ENCODE measurements at regions of chr3 and their contacts with region 1.

Region 1: GRCh38 chr3:189961525-189962161 is 159.1 kb downstream of the P3H2 start:
- DNase-seq: peak; percentile 65
- H3K4me3 ChIP-seq: no peak overlapping the region; a peak in 1 of 4 replicates
- H3K27ac ChIP-seq: no peak overlapping the region
- H3K4me1 ChIP-seq: no peaks in the 10 kb centered on the region; a peak in 1 of 4 replicates
- H3K27me3 ChIP-seq: no peaks in the 10 kb centered on the region; the same call in 1 of the 2 replicates
- CTCF ChIP-seq: peak; percentile 93
- EP300 ChIP-seq: no peak
- RAD21 ChIP-seq: peak; percentile 86

Region 2: DNA sequence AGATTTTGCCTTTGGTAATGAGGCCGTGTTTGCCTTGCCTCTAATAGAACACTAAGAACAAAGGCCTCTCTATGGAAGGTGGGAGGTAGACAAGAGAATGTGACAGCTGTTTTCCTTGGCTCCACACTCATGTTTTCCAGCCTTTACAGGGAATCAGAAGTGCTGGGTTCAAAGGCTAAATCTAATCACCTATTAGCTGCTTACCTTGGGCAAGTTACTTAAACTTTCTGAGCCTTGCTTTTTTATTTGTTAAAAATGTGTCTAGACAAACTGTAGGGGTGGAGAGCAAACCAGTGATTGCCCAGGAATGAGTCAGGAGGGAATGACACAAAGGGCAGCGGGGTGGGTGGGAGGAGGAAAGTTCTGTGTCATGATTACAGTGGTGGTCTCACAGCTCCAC is 20.0 kb before region 1 on chr3:
- CTCF ChIA-PET with region 1: interaction called, 13 read pairs
- POLR2A ChIA-PET with region 1: no interaction called
- DNase-seq: no peak
- H3K4me3 ChIP-seq: no peak overlapping the region
- H3K27ac ChIP-seq: no peak overlapping the region
- H3K4me1 ChIP-seq: 0 out of 4 replicates have a peak, but pooled peaks cover 0 to 4% of the 10 kb centered on the region in 2 experiments
- H3K27me3 ChIP-seq: peaks cover 16% of the 10 kb centered on the region; the same call in 1 of the 2 replicates
- CTCF ChIP-seq: no peak
- EP300 ChIP-seq: no peak
- RAD21 ChIP-seq: no peak

Region 3: DNA sequence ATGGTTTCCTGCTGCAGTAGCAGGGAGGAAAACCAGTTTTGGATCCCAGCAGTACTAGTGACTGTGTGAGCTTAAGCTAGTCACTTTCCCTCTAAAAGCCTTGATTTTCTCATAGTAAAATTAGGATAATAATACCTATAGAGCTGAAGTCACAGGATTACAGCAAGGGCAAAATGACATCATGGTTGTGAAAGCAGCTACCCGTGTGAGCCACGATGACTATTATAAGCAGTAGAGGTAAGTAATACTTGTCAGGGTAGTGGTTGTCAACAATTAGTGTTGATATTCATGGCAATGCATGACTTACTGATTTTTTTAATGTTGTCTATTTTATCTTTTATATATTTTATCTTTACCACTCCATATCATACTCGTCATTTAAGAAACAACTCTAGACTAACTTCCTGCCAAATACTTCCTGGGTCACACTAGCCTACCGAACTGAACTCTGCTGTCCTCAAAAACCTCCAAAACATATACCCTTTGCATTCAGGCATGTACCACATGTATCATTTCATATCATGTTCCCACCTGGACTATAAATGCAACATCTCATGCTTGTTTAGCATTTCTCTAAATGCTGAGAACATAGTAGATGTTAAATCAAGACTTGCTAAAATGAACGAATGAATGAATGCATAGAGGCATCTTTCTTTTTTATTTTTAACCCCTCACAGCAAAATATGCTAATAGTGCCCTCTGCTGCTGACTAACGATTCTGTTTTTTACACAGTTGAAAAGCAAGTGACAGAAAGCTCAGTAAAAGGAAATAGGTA is 13.5 kb before region 1 on chr3:
- CTCF ChIA-PET with region 1: interaction called, 13 read pairs
- POLR2A ChIA-PET with region 1: no interaction called
- DNase-seq: no peak
- H3K4me3 ChIP-seq: no peak overlapping the region
- H3K27ac ChIP-seq: no peak overlapping the region
- H3K4me1 ChIP-seq: 0 out of 4 replicates have a peak, but pooled peaks cover 0 to 4% of the 10 kb centered on the region in 2 experiments
- H3K27me3 ChIP-seq: peaks cover 18% of the 10 kb centered on the region; the same call in 1 of the 2 replicates
- CTCF ChIP-seq: peak; percentile 71
- EP300 ChIP-seq: no peak
- RAD21 ChIP-seq: peak; percentile 49

Region 4: GRCh38 chr3:190197346-190197763 is 235.7 kb after region 1 on chr3:
- CTCF ChIA-PET with region 1: interaction called, 42 read pairs
- POLR2A ChIA-PET with region 1: no interaction called
- DNase-seq: no peak
- H3K4me3 ChIP-seq: no peak overlapping the region
- H3K27ac ChIP-seq: no peak overlapping the region
- H3K4me1 ChIP-seq: no peaks in the 10 kb centered on the region
- H3K27me3 ChIP-seq: peaks cover 5% of the 10 kb centered on the region; the same call in 1 of the 2 replicates
- CTCF ChIP-seq: no peak
- EP300 ChIP-seq: no peak
- RAD21 ChIP-seq: no peak

Region 5: DNA sequence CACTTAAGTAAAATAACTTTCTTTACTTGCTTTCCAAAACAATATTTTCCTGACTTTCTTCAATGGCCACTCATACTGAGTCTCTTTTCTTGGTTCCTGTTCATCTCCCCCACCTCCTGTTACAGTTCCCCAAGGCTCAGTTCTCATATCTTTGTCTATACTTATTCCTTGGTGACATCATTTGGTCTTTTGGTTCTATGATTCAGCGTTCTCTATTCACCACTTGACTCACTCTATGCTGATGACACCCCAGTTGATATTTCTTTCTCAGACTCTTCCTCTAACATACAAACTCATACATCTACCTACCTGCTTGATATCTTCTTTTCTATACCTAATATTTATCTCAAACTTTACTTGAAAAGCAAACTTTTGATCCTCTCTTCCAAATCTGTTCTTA is 244.1 kb after region 1 on chr3:
- CTCF ChIA-PET with region 1: interaction called, 42 read pairs
- POLR2A ChIA-PET with region 1: no interaction called
- DNase-seq: no peak
- H3K4me3 ChIP-seq: no peak overlapping the region
- H3K27ac ChIP-seq: no peak overlapping the region
- H3K4me1 ChIP-seq: no peaks in the 10 kb centered on the region
- H3K27me3 ChIP-seq: no peaks in the 10 kb centered on the region; the same call in 1 of the 2 replicates
- CTCF ChIP-seq: no peak
- EP300 ChIP-seq: no peak
- RAD21 ChIP-seq: no peak

Region 6: DNA sequence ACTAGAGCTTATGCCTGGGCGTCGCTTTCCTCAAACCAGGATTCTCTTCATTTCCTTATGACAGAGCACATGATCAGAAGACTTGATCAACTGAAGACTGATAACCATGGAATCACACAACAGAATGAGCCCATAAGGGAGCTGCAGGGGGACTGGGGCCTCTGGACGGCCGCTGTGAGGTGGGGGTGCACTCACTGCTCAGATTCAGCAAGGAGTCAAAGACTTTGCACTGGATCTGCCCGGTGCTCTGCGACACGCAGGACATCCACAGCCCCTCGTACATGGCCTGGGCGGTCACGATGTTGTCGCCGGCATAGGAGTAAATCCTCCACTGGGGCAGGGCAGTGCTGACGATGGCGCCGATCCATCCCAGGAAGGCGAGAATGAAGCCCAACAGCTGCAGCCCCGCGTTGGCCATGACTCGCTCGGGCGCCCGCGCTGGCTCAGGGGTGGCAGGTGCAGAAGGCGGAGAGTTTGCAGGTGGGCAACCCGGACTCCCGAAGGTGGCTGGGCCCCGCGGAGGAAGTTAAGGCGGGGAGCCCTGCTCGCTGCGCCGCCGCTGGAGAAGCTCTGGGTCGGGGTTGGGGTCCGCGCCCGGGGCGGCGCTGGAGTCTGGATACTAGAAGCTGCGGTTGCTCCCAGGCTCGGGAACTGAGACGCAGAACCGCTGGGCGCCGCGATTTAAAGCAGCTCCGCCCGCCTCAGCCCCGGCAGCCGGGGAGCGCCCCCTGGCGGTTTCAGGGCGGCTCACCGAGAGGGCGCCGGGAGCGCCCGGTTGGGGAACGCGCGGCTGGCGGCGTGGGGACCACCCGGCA is 360.4 kb after region 1 on chr3 and contains the start of gene CLDN1:
- CTCF ChIA-PET with region 1: interaction called, 75 read pairs
- POLR2A ChIA-PET with region 1: no interaction called
- DNase-seq: peak; percentile 86
- H3K4me3 ChIP-seq: peak within 1 kb of the TSS; percentile 50 to 62
- H3K27ac ChIP-seq: no peak within 1 kb of the TSS
- H3K4me1 ChIP-seq: peaks cover 4 to 10% of the 10 kb centered on the region in 2 experiments; a peak in 2 of 4 replicates
- H3K27me3 ChIP-seq: peaks cover 32% of the 10 kb centered on the region
- CTCF ChIP-seq: peak; percentile 86
- EP300 ChIP-seq: no peak
- RAD21 ChIP-seq: peak; percentile 62
- polyA plus RNA-seq, gene CLDN1: 0.82 and 1.8 TPM in 2 replicates

Region 7: GRCh38 chr3:190424478-190425439 is 463.1 kb after region 1 on chr3:
- CTCF ChIA-PET with region 1: interaction called, 23 read pairs
- POLR2A ChIA-PET with region 1: no interaction called
- DNase-seq: peak; percentile 38
- H3K4me3 ChIP-seq: no peak overlapping the region
- H3K27ac ChIP-seq: no peak overlapping the region
- H3K4me1 ChIP-seq: no peaks in the 10 kb centered on the region
- H3K27me3 ChIP-seq: peaks cover 6% of the 10 kb centered on the region; the same call in 1 of the 2 replicates
- CTCF ChIP-seq: peak; percentile 81
- EP300 ChIP-seq: no peak
- RAD21 ChIP-seq: peak; percentile 62

Measured in SK-N-SH (cell line).